PC-3 (cell line): ENCODE measurements at regions of chr11 and their contacts with region 1.

Region 1: GRCh38 chr11:72112321-72113219 is at the start of gene ANAPC15:
- DNase-seq: peak; percentile 100
- ATAC-seq: peak; percentile 92
- H3K4me3 ChIP-seq: peak within 1 kb of the TSS; percentile 69
- H3K27ac ChIP-seq: peak within 1 kb of the TSS; percentile 88
- H3K4me1 ChIP-seq: peaks cover 17% of the 10 kb centered on the region
- H3K27me3 ChIP-seq: no peaks in the 10 kb centered on the region
- CTCF ChIP-seq: no peak
- total RNA-seq, gene ANAPC15: 65.4 and 68.8 TPM in 2 replicates

Region 2: DNA sequence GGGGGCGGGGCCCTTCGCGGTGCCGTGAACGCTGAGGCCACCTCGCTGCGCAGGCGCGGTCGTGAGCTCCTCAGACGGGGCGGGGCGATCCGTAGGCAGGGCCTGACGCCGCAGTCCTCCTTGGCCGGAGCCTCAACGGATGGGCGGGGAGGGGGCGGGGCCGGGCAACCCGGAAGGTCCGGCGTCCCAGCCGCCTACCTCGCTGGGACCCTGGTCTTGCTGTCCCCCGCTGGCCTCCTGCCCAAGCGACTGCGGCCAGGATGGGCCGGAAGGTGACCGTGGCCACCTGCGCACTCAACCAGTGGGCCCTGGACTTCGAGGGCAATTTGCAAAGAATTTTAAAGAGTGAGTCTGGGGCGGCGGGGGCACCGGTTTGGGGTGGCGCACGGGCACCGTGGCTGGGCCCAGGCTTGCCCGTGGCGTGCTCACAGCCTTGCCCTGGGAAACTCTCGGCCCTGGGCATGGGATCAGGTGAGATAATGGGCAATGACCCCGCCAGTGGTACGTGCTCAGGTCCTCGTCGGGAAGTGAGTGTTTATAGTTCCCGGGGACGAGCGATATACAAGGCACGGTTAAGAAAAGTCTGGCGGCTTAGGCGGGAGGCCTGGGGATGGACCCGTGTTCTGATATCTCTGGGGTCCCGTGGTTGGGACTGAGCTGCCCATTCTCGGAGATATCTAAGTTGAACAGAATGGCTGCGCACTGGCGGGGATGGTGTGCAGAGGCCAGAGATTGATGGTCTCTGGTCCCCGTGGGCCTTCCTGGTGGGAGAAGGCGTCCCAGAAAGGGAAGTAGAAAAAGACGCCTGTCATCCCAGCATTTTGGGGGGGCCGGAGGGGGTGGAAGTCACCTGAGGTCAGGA is 659.3 kb before region 1 on chr11 and contains the start of gene NADSYN1:
- CTCF ChIA-PET with region 1: no interaction called
- POLR2A ChIA-PET with region 1: interaction called, 13 read pairs
- intact Hi-C with region 1: no loop called
- DNase-seq: peak; percentile 98
- ATAC-seq: peak; percentile 69
- H3K4me3 ChIP-seq: peak within 1 kb of the TSS; percentile 99
- H3K27ac ChIP-seq: peak within 1 kb of the TSS; percentile 62
- H3K4me1 ChIP-seq: peaks cover 23% of the 10 kb centered on the region
- H3K27me3 ChIP-seq: no peaks in the 10 kb centered on the region
- CTCF ChIP-seq: no peak
- total RNA-seq, gene NADSYN1: 64.8 and 70.7 TPM in 2 replicates

Region 3: DNA sequence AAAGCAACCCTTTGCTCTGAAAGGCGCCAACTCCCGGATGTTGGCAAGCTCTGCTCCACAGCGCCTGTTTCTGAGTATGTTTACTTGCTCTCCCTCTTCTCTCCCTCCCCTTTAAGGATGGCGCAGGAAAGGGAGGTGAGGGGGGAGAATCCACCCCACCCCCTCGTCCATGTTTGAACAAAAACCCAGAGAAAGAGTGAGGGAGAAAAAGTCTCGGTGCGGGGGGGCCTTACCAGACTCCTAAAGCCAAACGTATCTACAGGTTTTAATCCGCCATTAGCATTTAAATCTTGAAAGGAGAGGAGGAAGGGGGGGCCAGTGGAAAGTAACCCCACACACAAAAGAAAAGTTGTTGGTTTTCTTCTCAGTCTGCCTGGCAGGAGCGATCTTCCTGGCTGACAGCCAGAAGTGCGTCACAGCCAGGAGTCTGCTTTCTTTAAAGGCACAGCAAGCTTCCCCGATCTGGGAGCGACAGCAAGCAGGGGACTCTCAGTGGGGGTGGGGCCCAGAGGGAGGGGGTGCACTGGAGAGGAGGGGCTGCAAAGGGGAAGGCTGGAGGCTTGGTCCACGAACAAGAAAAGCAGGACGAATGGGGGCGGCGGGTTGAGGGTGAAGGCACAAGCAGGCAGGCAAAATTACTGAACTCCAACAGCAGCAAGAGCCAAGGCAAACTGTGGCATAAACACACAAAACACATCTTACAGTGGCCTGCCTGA is 71.7 kb before region 1 on chr11:
- CTCF ChIA-PET with region 1: no interaction called
- POLR2A ChIA-PET with region 1: no interaction called
- intact Hi-C with region 1: loop called (anchors 1 kb)
- DNase-seq: peak; percentile 96
- ATAC-seq: peak; percentile 64
- H3K4me3 ChIP-seq: peak overlapping the region; percentile 67
- H3K27ac ChIP-seq: peak overlapping the region; percentile 83
- H3K4me1 ChIP-seq: peaks cover 42% of the 10 kb centered on the region
- H3K27me3 ChIP-seq: no peaks in the 10 kb centered on the region
- CTCF ChIP-seq: 0 out of 2 replicates have a peak, but pooled peaks have one; percentile 14

Region 4: DNA sequence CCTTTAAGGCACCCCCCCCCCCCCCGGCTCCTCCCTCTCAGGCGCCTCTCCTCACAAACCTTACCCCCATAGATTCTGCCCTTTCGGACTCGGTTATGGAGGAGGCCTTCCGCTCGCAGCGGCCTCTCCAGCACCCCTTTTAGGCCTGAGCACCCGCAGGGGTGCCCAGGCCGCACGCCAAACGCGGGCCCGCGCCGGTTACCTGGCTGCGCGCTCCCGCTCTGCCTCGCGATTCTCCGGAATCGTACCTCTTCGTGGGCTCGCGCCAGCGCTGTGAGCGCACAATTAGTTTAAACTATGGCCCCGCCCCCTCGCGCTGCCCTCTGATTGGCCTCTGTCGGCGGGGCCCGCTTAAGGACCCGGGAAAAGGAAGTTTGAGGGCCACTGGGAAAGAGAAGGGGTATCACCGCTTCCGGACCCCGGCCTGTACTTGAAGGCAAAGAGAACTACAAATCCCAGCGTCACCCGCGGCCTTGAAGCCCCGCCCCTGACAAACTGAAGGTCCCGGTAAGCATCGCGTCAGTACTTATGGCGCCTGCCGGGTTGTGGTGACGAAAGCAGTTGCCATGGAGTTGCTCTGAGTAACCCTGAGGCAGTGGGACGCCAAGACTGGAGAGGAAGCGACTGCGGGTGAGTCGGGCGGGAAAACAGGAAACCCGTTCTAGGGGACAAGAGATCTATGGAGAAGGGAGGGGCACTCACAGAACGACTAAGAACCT is 32.2 kb before region 1 on chr11 and contains the starts of genes LRRC51 and NUMA1:
- CTCF ChIA-PET with region 1: no interaction called
- POLR2A ChIA-PET with region 1: no interaction called
- intact Hi-C with region 1: loop called (anchors 1 kb)
- DNase-seq: peak; percentile 100
- ATAC-seq: peak; percentile 93
- H3K4me3 ChIP-seq: peak within 1 kb of the TSS; percentile 86
- H3K27ac ChIP-seq: peak within 1 kb of the TSS; percentile 69
- H3K4me1 ChIP-seq: peaks cover 31% of the 10 kb centered on the region
- H3K27me3 ChIP-seq: no peaks in the 10 kb centered on the region
- CTCF ChIP-seq: no peak
- total RNA-seq, gene LRRC51: 5.8 and 6.6 TPM in 2 replicates
- total RNA-seq, gene NUMA1: 145 and 202 TPM in 2 replicates

Region 5: GRCh38 chr11:72222907-72223614 is 110.5 kb after region 1 on chr11:
- CTCF ChIA-PET with region 1: no interaction called
- POLR2A ChIA-PET with region 1: no interaction called
- intact Hi-C with region 1: loop called (anchors 2 kb)
- DNase-seq: peak; percentile 96
- ATAC-seq: peak; percentile 78
- H3K4me3 ChIP-seq: peak overlapping the region; percentile 97
- H3K27ac ChIP-seq: peak overlapping the region; percentile 34
- H3K4me1 ChIP-seq: peaks cover 14% of the 10 kb centered on the region
- H3K27me3 ChIP-seq: peaks cover 7% of the 10 kb centered on the region; the same call in 1 of the 2 replicates
- CTCF ChIP-seq: no peak

Region 6: GRCh38 chr11:73170140-73170539 is 1057.6 kb after region 1 on chr11:
- CTCF ChIA-PET with region 1: no interaction called
- POLR2A ChIA-PET with region 1: interaction called, 30 read pairs
- intact Hi-C with region 1: no loop called
- DNase-seq: no peak
- ATAC-seq: peak; percentile 39
- H3K4me3 ChIP-seq: no peak overlapping the region
- H3K27ac ChIP-seq: no peak overlapping the region
- H3K4me1 ChIP-seq: peaks cover 8% of the 10 kb centered on the region
- H3K27me3 ChIP-seq: no peaks in the 10 kb centered on the region
- CTCF ChIP-seq: no peak